ENCODE measurements at regions of chr17 and their contacts with region 1.

Region 1: GRCh38 chr17:44556832-44557606 is at the start of gene FZD2:
- DNase-seq: peak; percentile 91 to 94
- ATAC-seq: peak; percentile 92
- H3K4me3 ChIP-seq: peak within 1 kb of the TSS; percentile 67 to 76
- H3K27ac ChIP-seq: peak within 1 kb of the TSS; percentile 65 to 74
- H3K4me1 ChIP-seq: no peaks in the 10 kb centered on the region
- H3K27me3 ChIP-seq: no peaks in the 10 kb centered on the region
- total RNA-seq, gene FZD2: 7.4 to 22.1 TPM

Region 2: GRCh38 chr17:44533533-44534246 is 23.3 kb before region 1 on chr17:
- intact Hi-C with region 1: loop called in 1 of 2 experiments (anchors 2 kb)
- DNase-seq: peak; percentile 95 to 98
- ATAC-seq: peak; percentile 94
- H3K4me3 ChIP-seq: no peak overlapping the region
- H3K27ac ChIP-seq: peak overlapping the region in 1 of 2 donors; percentile 11
- H3K4me1 ChIP-seq: no peaks in the 10 kb centered on the region
- H3K27me3 ChIP-seq: no peaks in the 10 kb centered on the region

Region 3: DNA sequence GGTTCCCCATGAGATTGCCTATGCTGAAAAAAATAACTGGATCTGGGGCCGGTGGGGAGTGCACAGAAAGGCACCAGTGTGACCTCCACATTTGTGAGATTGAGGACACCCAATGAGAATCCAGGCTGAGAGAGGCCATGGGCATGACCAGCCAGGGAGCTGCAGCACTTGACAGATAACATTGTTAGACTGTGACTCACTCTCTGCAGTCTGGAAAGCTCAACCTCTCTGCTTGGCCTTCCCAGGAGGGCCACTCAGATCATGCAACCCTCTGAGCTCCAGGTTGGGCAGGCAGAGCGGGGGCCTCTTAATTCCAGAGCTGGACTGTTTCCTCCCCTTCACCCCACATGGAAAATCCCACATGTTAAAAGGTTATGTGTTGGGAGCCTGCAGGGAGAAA is 30.3 kb after region 1 on chr17:
- intact Hi-C with region 1: loop called in 1 of 2 experiments (anchors 2 kb)
- DNase-seq: peak; percentile 85 to 88
- ATAC-seq: peak; percentile 90
- H3K4me3 ChIP-seq: no peak overlapping the region
- H3K27ac ChIP-seq: peak overlapping the region; percentile 88 to 96
- H3K4me1 ChIP-seq: peaks cover 0 to 9% of the 10 kb centered on the region in 2 donors
- H3K27me3 ChIP-seq: no peaks in the 10 kb centered on the region

Region 4: DNA sequence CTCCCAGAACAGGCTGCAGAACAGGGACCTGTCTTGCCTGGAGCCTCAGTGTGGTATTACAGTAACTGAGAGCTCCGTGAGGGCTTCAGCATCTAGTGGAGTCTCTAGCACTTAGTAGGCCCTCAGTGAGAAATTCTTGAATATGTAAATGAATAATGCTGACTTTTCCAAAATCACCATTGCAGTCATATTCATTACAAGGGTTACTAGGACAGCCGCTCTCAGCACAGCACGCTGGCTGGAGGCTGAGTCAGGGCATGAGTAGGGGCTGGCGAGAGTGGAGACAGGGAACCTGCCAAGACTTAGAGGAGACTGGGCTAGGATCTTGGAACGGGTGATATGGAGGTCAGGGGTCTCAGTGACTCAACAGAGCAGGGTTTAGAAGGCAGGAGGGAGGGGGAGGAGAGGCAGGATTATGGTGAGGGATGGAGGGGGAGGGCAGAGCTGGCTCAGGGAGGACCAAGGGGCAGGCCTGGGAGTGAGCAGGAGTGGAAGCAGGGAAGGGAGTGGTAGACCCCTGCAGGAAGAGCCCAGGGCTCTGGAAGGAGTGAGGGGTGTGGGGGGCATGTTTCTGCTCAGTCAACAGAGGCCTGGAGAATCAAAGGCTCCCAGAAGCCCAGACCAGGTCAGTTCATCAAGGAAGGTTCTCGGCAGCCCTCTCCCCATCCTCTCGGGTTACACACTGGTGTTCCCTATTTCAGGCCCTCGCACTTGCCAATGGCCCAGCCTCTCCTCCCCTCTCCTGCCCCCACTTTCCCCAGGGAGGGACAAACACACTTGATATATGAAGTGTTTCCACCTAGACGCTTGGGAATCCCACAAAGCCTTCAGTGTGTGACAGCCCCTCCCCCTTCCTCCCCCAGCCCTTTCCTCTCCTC is 42.5 kb after region 1 on chr17:
- intact Hi-C with region 1: loop called in 1 of 2 experiments (anchors 5 kb)
- DNase-seq: peak; percentile 93
- ATAC-seq: peak; percentile 92
- H3K4me3 ChIP-seq: no peak overlapping the region
- H3K27ac ChIP-seq: peak overlapping the region in 1 of 2 donors; percentile 47
- H3K4me1 ChIP-seq: no peaks in the 10 kb centered on the region
- H3K27me3 ChIP-seq: no peaks in the 10 kb centered on the region

Region 5: DNA sequence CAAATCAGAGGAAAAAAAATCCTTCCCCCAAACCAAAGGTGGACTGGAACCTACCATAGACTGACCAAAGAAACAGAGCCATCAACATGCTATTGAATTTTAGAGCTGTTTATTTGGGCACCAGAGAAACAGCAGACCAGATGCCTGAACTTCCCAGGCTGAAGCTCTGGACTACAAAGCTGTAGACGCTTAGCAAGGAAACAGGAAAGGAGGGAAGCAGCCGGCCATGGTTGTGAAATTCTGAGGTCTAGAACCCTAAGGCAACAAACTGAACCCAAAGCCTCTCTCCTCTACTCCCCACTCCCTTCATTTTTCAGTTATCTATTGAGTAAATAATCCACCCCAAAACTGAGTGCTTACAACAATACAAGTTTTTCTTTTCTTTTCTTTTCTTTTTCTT is 53.9 kb after region 1 on chr17:
- intact Hi-C with region 1: no loop called
- DNase-seq: peak in 1 of 2 donors; percentile 58
- ATAC-seq: no peak
- H3K4me3 ChIP-seq: no peak overlapping the region
- H3K27ac ChIP-seq: peak overlapping the region in 1 of 2 donors; percentile 6
- H3K4me1 ChIP-seq: no peaks in the 10 kb centered on the region
- H3K27me3 ChIP-seq: no peaks in the 10 kb centered on the region